ENCODE measurements at regions of chr1 and their contacts with region 1.

Region 1: GRCh38 chr1:172826096-172826743 is 167.3 kb downstream of the FASLG start:
- DNase-seq: peak; percentile 87
- H3K4me3 Mint-ChIP-seq: no peak overlapping the region
- H3K27ac Mint-ChIP-seq: no peak overlapping the region
- H3K4me1 Mint-ChIP-seq: peaks cover 7% of the 10 kb centered on the region
- H3K27me3 Mint-ChIP-seq: no peaks in the 10 kb centered on the region
- CTCF ChIP-seq: peak; percentile 86

Region 2: GRCh38 chr1:172708452-172708851 is 117.8 kb before region 1 on chr1:
- CTCF ChIA-PET with region 1: no interaction called
- POLR2A ChIA-PET with region 1: no interaction called
- intact Hi-C with region 1: no loop called
- DNase-seq: no peak
- H3K4me3 Mint-ChIP-seq: no peak overlapping the region
- H3K27ac Mint-ChIP-seq: no peak overlapping the region
- H3K4me1 Mint-ChIP-seq: no peaks in the 10 kb centered on the region
- H3K27me3 Mint-ChIP-seq: no peaks in the 10 kb centered on the region
- CTCF ChIP-seq: no peak

Region 3: DNA sequence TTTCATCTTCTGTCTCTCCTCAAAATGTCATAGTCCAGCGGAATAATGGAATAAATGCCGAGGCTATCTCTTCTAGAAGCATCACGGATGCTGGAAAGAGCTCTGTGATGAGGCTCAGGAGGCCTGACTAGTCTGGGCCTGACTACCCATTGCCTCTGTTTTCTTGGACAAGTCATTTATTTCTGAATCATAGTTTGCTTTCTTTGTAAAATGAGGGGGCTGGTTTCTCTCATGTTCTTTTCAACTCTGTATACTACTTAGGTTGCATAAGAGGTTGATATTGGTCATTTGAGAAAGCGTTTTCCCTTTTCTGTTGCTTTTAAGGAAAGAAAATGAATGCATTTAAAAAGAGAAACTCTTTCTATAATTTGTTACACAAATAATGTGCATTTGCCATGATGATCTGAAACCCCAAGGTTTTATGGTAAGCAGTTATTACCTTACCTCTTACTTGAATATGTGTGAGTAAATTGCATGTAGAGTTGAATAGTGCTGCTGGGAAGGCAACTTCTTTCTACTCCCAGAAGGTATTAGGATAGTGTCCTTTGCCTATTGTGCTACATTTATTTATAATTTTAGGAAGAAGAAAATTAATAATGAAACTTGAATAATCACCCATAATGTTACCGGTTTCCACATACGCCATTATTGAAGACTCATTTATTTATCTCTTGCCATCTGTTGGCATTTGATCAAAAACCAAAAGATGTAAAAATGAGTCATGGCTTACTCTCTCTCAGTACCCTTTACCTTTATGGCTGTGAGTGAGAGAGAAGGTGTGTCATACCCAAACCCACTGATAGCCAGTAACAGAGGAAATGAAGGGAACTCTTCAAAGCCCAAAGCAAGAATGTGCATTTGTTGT is 11.8 kb after region 1 on chr1:
- CTCF ChIA-PET with region 1: interaction called, 26 read pairs
- POLR2A ChIA-PET with region 1: interaction called, 13 read pairs
- intact Hi-C with region 1: no loop called
- DNase-seq: peak; percentile 90
- H3K4me3 Mint-ChIP-seq: no peak overlapping the region
- H3K27ac Mint-ChIP-seq: no peak overlapping the region
- H3K4me1 Mint-ChIP-seq: peaks cover 16% of the 10 kb centered on the region
- H3K27me3 Mint-ChIP-seq: no peaks in the 10 kb centered on the region
- CTCF ChIP-seq: no peak

Region 4: DNA sequence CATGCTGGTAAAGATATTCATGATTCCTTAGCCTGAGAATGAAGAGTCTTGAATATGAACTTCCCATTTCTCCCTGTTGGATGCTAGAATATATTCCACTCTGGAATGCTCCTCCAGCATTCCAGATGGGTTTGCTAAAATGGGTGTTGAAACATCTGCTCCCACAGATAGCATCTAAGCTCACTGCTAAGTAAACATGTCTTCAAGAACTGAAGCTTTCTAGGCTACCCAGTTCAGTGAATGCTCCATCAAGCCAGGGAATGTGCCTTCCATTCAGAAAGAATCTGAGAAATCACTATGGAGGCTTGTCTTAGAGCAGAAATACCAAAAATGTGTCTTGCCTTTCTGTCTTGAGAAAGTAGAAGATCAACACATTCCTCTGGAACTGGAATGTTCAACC is 143.4 kb after region 1 on chr1:
- CTCF ChIA-PET with region 1: interaction called, 5 read pairs
- POLR2A ChIA-PET with region 1: interaction called, 5 read pairs
- intact Hi-C with region 1: loop called (anchors 2 kb)
- DNase-seq: peak; percentile 30
- H3K4me3 Mint-ChIP-seq: no peak overlapping the region
- H3K27ac Mint-ChIP-seq: no peak overlapping the region
- H3K4me1 Mint-ChIP-seq: peaks cover 47% of the 10 kb centered on the region
- H3K27me3 Mint-ChIP-seq: no peaks in the 10 kb centered on the region
- CTCF ChIP-seq: no peak

Region 5: GRCh38 chr1:173122958-173123852 is 297.0 kb after region 1 on chr1:
- CTCF ChIA-PET with region 1: interaction called, 5 read pairs
- POLR2A ChIA-PET with region 1: interaction called, 4 read pairs
- intact Hi-C with region 1: loop called (anchors 1 kb)
- DNase-seq: peak; percentile 98
- H3K4me3 Mint-ChIP-seq: peak overlapping the region; percentile 72
- H3K27ac Mint-ChIP-seq: peak overlapping the region; percentile 98
- H3K4me1 Mint-ChIP-seq: peaks cover 24% of the 10 kb centered on the region
- H3K27me3 Mint-ChIP-seq: no peaks in the 10 kb centered on the region
- CTCF ChIP-seq: no peak

Region 6: GRCh38 chr1:173212952-173213491 is 386.8 kb after region 1 on chr1:
- CTCF ChIA-PET with region 1: interaction called, 33 read pairs
- POLR2A ChIA-PET with region 1: interaction called, 4 read pairs
- intact Hi-C with region 1: no loop called
- DNase-seq: no peak
- H3K4me3 Mint-ChIP-seq: no peak overlapping the region
- H3K27ac Mint-ChIP-seq: no peak overlapping the region
- H3K4me1 Mint-ChIP-seq: no peaks in the 10 kb centered on the region
- H3K27me3 Mint-ChIP-seq: no peaks in the 10 kb centered on the region
- CTCF ChIP-seq: no peak

Region 7: GRCh38 chr1:173409613-173410012 is 583.4 kb after region 1 on chr1:
- CTCF ChIA-PET with region 1: interaction called, 3 read pairs
- POLR2A ChIA-PET with region 1: no interaction called
- intact Hi-C with region 1: loop called (anchors 5 kb)
- DNase-seq: peak; percentile 69
- H3K4me3 Mint-ChIP-seq: no peak overlapping the region
- H3K27ac Mint-ChIP-seq: peak overlapping the region; percentile 31
- H3K4me1 Mint-ChIP-seq: peaks cover 31% of the 10 kb centered on the region
- H3K27me3 Mint-ChIP-seq: no peaks in the 10 kb centered on the region
- CTCF ChIP-seq: no peak

Region 8: DNA sequence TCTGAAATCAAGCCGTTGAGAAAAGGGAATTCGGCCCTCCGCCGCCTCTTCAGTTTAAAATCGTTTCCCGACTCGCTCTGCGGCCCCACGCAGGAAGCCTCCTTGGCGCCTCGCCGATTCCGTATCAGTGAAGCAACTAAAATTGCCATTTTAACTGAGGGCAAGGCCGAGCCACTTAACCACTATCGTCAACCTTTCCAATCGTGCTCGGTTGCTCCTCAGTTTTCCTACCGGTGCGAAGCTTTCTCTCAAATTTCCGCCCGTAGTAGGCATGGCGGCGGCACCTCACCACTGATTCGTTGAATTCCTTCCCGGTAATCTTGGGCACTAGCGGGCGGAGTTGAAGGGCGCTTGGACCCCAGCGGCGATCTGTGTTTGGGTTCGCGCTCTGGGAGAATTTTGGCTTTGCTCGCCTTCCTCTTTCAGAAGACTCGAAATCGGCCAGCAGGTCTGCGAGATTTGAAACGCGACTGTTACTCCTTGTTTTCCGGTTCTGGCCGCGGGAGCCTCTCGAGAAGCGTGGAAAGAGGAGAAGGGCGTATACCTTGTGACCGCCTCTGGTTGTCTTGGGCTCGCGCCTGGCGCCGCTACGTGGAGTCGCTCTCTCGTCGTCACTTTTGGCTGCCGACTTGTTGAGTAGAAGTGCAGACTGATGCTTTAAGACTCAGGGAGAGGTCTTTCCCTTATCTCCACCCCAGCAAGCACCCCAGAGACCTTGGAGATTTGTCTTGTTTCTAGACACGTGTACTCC is 998.3 kb after region 1 on chr1 and contains the starts of genes CENPL and DARS2:
- CTCF ChIA-PET with region 1: no interaction called
- POLR2A ChIA-PET with region 1: interaction called, 5 read pairs
- intact Hi-C with region 1: loop called (anchors 10 kb)
- DNase-seq: peak; percentile 100
- H3K4me3 Mint-ChIP-seq: peak within 1 kb of the TSS; percentile 97
- H3K27ac Mint-ChIP-seq: peak within 1 kb of the TSS; percentile 98
- H3K4me1 Mint-ChIP-seq: peaks cover 39% of the 10 kb centered on the region
- H3K27me3 Mint-ChIP-seq: no peaks in the 10 kb centered on the region
- CTCF ChIP-seq: no peak
- total RNA-seq, gene CENPL: 14.1 and 24.5 TPM in 2 replicates
- total RNA-seq, gene DARS2: 34.6 and 40.4 TPM in 2 replicates

Measured in MCF 10A (cell line).